ENCODE measurements at regions of chr15 and their contacts with region 1.

Region 1: GRCh38 chr15:39782441-39783138 is at the start of gene FSIP1:
- DNase-seq: peak; percentile 96 to 97
- ATAC-seq: peak; percentile 99 to 100 (median 100)
- H3K4me3 ChIP-seq: peak within 1 kb of the TSS; percentile 47 to 90 (median 75)
- H3K27ac ChIP-seq: peak within 1 kb of the TSS in 9 of 10 donors; percentile 58 to 90 (median 79)
- H3K4me1 ChIP-seq: peaks cover 0 to 46% (median 18%) of the 10 kb centered on the region in 9 donors
- H3K27me3 ChIP-seq: no peaks in the 10 kb centered on the region
- CTCF ChIP-seq: no peak
- total RNA-seq, gene FSIP1: 0.15 to 4.4 (median 0.89) TPM

Region 2: GRCh38 chr15:39602143-39602542 is 180.4 kb before region 1 on chr15:
- intact Hi-C with region 1: no loop called
- DNase-seq: no peak
- ATAC-seq: no peak
- H3K4me3 ChIP-seq: no peak overlapping the region
- H3K27ac ChIP-seq: no peak overlapping the region
- H3K4me1 ChIP-seq: peaks cover 0 to 5% (median 0%) of the 10 kb centered on the region in 9 donors
- H3K27me3 ChIP-seq: no peaks in the 10 kb centered on the region
- CTCF ChIP-seq: no peak

Region 3: GRCh38 chr15:39874890-39875549 is 92.4 kb after region 1 on chr15:
- intact Hi-C with region 1: loop called in 7 of 10 experiments (anchors 1 to 5 kb)
- DNase-seq: no peak
- ATAC-seq: no peak
- H3K4me3 ChIP-seq: no peak overlapping the region
- H3K27ac ChIP-seq: no peak overlapping the region
- H3K4me1 ChIP-seq: peaks cover 0 to 2% (median 0%) of the 10 kb centered on the region in 9 donors
- H3K27me3 ChIP-seq: no peaks in the 10 kb centered on the region
- CTCF ChIP-seq: peak; percentile 22 to 73 (median 59)

Region 4: GRCh38 chr15:39920510-39921273 is 138.1 kb after region 1 on chr15:
- intact Hi-C with region 1: loop called in 1 of 10 experiments (anchors 5 kb)
- DNase-seq: peak; percentile 75 to 81
- ATAC-seq: peak; percentile 95 to 98 (median 96)
- H3K4me3 ChIP-seq: peak overlapping the region; percentile 38 to 96 (median 70)
- H3K27ac ChIP-seq: peak overlapping the region; percentile 34 to 83 (median 71)
- H3K4me1 ChIP-seq: peaks cover 0 to 30% (median 19%) of the 10 kb centered on the region in 9 donors
- H3K27me3 ChIP-seq: peaks cover 0 to 41% (median 26%) of the 10 kb centered on the region in 7 donors
- CTCF ChIP-seq: peak in 3 of 9 donors; percentile 3 to 29 (median 19)

Region 5: DNA sequence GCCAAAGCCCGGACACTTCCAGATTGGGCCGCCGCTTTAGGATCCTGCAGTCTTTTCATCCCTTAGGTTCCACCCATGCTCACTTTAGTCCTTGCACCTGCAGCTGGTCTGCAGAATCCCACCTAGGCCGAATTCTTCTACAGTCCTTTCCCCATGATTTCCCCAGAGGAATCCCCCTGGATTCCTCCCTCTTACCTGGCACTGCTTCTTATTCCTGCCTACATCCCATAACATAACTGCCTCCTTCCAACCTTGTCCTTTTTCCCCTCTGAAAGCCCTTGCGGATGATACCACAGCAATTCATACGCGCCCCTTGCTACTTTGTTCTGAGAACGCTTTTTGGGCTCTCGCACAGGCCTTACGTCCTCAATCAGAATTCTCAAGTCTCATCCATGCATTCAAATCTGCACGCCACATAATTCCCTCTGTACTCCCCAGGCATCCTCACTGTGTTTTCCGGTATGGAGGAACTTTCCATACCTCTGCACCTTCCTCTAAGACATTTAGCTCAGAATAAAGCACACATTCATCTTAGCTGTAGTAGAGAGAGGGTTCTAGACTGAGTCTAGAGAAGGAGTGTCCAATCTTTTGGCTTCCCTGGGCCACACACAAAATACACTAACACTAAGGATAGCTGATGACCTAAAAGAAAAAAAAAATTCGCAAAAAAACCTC is 151.9 kb after region 1 on chr15:
- intact Hi-C with region 1: loop called in 7 of 10 experiments (anchors 2 to 10 kb)
- DNase-seq: no peak
- ATAC-seq: peak in 3 of 8 donors; percentile 4 to 13 (median 10)
- H3K4me3 ChIP-seq: peak overlapping the region; percentile 47 to 89 (median 74)
- H3K27ac ChIP-seq: peak overlapping the region; percentile 8 to 95 (median 88)
- H3K4me1 ChIP-seq: peaks cover 3 to 54% (median 37%) of the 10 kb centered on the region in 9 donors
- H3K27me3 ChIP-seq: no peaks in the 10 kb centered on the region
- CTCF ChIP-seq: no peak

Region 6: DNA sequence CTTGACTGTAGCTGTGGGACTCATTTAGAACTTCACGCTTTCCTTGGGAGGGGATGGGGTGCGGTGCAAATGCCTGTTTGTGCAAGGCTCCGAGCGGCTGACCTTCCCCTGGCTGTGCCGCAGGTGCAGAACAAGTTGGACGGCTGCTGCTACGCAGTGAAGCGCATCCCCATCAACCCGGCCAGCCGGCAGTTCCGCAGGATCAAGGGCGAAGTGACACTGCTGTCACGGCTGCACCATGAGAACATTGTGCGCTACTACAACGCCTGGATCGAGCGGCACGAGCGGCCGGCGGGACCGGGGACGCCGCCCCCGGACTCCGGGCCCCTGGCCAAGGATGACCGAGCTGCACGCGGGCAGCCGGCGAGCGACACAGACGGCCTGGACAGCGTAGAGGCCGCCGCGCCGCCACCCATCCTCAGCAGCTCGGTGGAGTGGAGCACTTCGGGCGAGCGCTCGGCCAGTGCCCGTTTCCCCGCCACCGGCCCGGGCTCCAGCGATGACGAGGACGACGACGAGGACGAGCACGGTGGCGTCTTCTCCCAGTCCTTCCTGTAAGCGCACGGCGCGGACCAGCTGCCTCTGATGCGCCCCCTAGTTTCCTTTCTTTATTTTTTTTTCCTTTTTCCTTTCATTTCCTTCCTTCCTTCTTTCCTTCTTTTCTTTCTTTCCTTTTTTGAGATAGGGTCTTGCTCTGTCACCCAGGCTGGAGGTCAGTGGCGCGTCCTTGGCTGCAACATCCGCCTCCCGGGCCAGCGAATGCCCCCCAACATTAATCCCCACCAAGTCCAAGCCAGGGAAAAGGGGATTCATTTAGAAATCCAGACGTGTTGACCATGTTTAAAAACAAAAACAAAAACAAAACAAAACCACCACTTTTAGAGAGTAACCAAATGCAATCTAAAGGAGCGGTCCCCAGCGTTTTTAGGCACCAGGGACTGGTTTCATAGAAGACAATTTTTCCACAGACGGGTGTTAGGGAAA is 194.0 kb after region 1 on chr15:
- intact Hi-C with region 1: loop called in 6 of 10 experiments (anchors 5 to 10 kb)
- DNase-seq: peak; percentile 67 to 72
- ATAC-seq: peak; percentile 89 to 96 (median 92)
- H3K4me3 ChIP-seq: peak overlapping the region; percentile 25 to 70 (median 58)
- H3K27ac ChIP-seq: peak overlapping the region in 9 of 10 donors; percentile 42 to 83 (median 60)
- H3K4me1 ChIP-seq: peaks cover 0 to 17% (median 5%) of the 10 kb centered on the region in 9 donors
- H3K27me3 ChIP-seq: no peaks in the 10 kb centered on the region
- CTCF ChIP-seq: peak in 7 of 9 donors; percentile 43 to 72 (median 59)

Region 7: DNA sequence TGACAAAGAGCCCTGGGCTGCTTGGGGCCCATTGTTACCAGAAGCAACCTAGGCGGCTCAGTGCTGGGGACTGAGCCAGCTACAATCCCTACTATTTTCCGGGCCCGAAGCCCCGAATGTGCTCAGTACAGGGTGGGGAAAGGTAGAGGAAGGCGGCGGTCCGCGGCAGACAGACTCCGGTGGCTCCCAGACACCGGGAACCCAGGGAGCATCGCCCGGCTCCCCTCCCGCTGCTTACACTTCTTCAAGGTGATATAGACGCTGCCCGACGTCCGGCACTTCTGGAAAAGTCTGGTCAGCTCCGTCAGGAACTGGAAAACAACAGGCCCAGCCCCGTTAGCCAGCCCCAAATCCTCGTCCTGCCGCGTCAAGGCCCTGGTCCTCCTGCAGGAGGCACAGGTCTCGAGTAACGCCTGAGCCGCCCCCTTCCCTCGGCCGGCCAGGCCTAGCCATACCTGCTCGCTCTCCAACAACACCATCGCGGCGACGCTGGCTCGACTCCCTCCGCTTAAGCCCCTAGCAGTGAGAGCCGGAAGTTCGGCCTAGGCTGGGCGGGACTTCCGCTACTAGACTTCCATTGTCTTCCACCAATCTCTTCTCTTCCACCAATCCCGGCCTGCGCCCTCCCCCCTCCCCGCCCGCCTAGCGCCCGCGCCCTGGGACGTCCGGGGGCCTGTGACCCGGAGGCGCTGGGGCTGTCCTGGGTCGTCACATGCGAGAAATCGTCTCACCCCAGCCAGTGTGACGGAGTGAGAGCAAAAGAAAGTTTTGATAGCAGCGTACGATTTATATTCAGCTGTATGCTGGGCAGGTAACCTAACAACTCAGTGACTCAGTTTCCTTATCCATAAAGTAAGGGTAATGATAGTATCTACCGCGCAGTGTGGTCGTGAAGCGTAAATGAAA is 256.3 kb after region 1 on chr15 and contains the start of gene SRP14:
- intact Hi-C with region 1: loop called in 3 of 10 experiments (anchors 10 kb)
- DNase-seq: peak; percentile 96 to 97
- ATAC-seq: peak; percentile 95 to 98 (median 98)
- H3K4me3 ChIP-seq: peak within 1 kb of the TSS; percentile 49 to 94 (median 78)
- H3K27ac ChIP-seq: peak within 1 kb of the TSS; percentile 77 to 98 (median 95)
- H3K4me1 ChIP-seq: peaks cover 5 to 51% (median 32%) of the 10 kb centered on the region in 9 donors
- H3K27me3 ChIP-seq: no peaks in the 10 kb centered on the region
- CTCF ChIP-seq: peak in 3 of 9 donors; percentile 21 to 31 (median 23)
- total RNA-seq, gene SRP14: 189 to 290 (median 210) TPM